H1 (cell line): ENCODE measurements at regions of chr1 and their contacts with region 1.

Region 1: DNA sequence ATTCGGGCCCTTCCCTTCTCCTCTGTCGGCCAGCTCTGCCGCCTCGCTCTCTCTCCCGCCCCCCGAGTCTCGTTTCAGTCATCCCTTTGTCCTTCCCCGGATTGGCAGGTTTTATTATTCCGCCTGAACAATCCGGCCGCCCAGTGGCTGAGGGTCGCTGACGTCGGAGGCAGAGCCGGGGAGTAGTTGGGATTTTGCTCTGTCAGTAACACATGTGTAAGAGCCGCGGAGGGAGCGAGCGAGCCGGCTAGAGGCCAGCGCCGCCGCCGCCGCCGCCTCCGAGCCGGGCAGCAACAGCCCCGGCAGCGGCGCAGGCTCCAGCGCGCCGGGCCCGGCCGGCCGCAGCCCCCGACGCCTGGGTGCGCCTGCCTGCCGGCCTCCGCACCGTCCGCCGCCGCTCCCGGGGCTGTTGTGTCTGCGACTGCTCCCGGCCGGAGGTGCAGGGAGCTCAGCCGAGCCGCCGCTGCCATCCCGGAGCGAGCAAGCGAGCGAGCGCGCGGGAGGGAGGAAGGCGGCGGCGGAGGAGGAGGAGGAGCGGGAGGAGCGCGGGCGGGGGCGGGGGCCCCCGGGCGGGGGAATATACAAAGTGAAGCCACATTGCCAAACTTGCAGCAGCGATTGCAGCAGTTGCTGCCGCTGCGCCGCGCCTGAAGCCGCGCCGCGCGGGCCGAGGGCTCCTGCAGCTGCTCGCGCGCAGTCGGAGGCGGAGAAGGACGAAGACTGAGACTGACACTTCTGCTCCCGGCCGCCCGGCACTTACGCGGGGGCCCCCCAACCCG is at the start of gene LMO4:
- DNase-seq: peak; percentile 86 to 91
- H3K4me3 ChIP-seq: peak within 1 kb of the TSS; percentile 69 to 82 (median 75)
- H3K27ac ChIP-seq: 0 out of 2 replicates have a peak within 1 kb of the TSS, but pooled peaks have one; percentile 47
- H3K4me1 ChIP-seq: peaks cover 2 to 16% (median 11%) of the 10 kb centered on the region in 4 experiments; a peak in 5 of 7 replicates
- H3K27me3 ChIP-seq: no peaks in the 10 kb centered on the region
- CTCF ChIP-seq: no peak
- EP300 ChIP-seq: no peak
- POLR2A ChIP-seq: peak; percentile 64 to 77
- RAD21 ChIP-seq: no peak
- total RNA-seq, gene LMO4: 65.6 and 71.7 TPM in 2 replicates

Region 2: DNA sequence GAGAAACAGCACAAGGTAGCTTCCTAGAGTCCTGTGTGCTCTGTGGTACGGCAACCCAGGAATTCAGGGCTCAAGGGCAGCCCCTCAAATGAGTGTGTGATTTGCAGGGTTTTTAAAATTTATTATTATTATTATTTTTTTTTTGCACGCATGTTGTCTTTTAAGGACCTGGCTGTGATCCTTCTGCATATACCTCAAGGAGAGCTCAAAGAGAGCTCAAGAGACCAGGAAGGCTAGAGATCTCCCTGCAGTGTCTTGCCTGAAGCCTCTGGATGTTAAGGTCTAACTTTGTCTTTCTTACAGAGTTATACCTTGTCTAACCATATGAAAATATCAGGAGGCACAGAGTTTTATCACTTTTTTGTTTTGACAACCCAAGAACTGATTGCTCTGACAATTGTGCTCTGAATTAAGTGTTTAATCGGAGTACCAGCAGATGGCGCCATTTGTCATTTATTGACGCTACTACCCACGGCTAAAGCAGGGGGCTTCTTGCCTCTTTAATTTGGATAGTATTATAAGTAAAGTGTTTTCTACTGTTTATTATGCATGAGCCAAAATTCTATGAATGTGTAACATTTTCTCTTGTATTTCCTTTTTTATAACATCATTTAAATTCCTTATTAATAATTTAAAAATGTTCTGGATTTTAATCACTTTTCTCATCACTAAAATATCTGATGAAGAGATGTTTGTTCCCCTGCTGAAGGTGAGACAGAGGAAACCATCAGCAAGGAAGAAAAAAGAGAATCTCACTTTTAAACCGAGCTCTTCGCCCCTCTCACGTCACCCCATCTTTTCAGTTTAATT is 35.6 kb before region 1 on chr1:
- CTCF ChIA-PET with region 1: interaction called, 21 read pairs
- POLR2A ChIA-PET with region 1: interaction called, 5 read pairs
- DNase-seq: peak; percentile 7 to 78
- H3K4me3 ChIP-seq: no peak overlapping the region
- H3K27ac ChIP-seq: no peak overlapping the region
- H3K4me1 ChIP-seq: peaks cover 0 to 5% (median 3%) of the 10 kb centered on the region in 4 experiments; a peak in 2 of 7 replicates
- H3K27me3 ChIP-seq: no peaks in the 10 kb centered on the region
- CTCF ChIP-seq: peak in 2 of 3 experiments; percentile 68 to 74; a peak in 3 of 4 replicates
- EP300 ChIP-seq: no peak
- POLR2A ChIP-seq: no peak
- RAD21 ChIP-seq: peak; percentile 88

Region 3: GRCh38 chr1:87305762-87306161 is 22.7 kb before region 1 on chr1:
- CTCF ChIA-PET with region 1: interaction called, 29 read pairs
- POLR2A ChIA-PET with region 1: interaction called, 10 read pairs
- DNase-seq: no peak
- H3K4me3 ChIP-seq: no peak overlapping the region
- H3K27ac ChIP-seq: no peak overlapping the region
- H3K4me1 ChIP-seq: peaks cover 0 to 11% (median 0%) of the 10 kb centered on the region in 4 experiments; a peak in 4 of 7 replicates
- H3K27me3 ChIP-seq: no peaks in the 10 kb centered on the region
- CTCF ChIP-seq: no peak
- EP300 ChIP-seq: no peak
- POLR2A ChIP-seq: no peak
- RAD21 ChIP-seq: no peak

Region 4: GRCh38 chr1:87318056-87318650 is 10.3 kb before region 1 on chr1:
- CTCF ChIA-PET with region 1: interaction called, 22 read pairs
- POLR2A ChIA-PET with region 1: interaction called, 9 read pairs
- DNase-seq: no peak
- H3K4me3 ChIP-seq: no peak overlapping the region
- H3K27ac ChIP-seq: no peak overlapping the region
- H3K4me1 ChIP-seq: no peaks in the 10 kb centered on the region
- H3K27me3 ChIP-seq: no peaks in the 10 kb centered on the region
- CTCF ChIP-seq: no peak
- EP300 ChIP-seq: no peak
- POLR2A ChIP-seq: no peak
- RAD21 ChIP-seq: no peak

Region 5: DNA sequence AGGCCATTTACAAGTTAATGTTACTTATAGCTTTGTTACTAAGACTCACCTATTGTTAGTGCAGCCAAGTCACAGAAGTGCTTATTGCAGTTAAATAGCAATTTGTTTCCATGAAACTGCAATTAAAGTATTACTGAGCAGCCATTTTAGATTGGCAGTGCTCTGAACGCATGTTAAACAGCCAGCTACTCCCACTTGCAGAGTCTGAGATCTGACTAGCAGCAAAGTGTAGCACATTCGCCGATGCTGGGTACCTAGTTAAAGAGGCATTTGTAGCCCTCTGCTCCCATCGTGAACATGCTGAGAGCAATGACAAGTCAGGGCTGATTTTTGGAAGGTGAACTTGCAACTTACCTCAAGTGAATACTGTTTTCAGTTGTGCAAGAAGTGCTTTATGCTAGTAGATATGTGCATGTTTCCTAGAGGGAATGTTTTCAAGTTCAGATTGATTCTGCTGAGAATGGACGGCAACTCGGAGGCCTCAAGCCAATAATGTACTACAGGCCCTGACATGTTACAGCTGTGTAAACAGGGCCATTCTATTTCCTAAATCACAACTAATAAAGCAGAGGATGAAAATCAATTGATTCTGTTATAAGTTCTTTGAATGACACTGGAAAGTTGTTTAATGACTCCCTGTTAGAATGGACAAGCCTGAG is 20.0 kb after region 1 on chr1:
- CTCF ChIA-PET with region 1: interaction called, 13 read pairs
- POLR2A ChIA-PET with region 1: interaction called, 184 read pairs
- DNase-seq: no peak
- H3K4me3 ChIP-seq: no peak overlapping the region
- H3K27ac ChIP-seq: no peak overlapping the region
- H3K4me1 ChIP-seq: peaks cover 0 to 7% (median 2%) of the 10 kb centered on the region in 4 experiments; a peak in 3 of 7 replicates
- H3K27me3 ChIP-seq: no peaks in the 10 kb centered on the region
- CTCF ChIP-seq: no peak
- EP300 ChIP-seq: no peak
- POLR2A ChIP-seq: no peak
- RAD21 ChIP-seq: no peak